Panc1 (cell line): ENCODE measurements at regions of chr20 and their contacts with region 1.

Region 1: GRCh38 chr20:40875116-40876085 is 153.2 kb upstream of the TOP1 start:
- DNase-seq: no peak
- ATAC-seq: no peak
- H3K4me3 ChIP-seq: no peak overlapping the region
- H3K27ac ChIP-seq: no peak overlapping the region
- H3K4me1 ChIP-seq: no peaks in the 10 kb centered on the region
- H3K27me3 ChIP-seq: no peaks in the 10 kb centered on the region; the same call in 1 of the 2 replicates
- CTCF ChIP-seq: no peak

Region 2: DNA sequence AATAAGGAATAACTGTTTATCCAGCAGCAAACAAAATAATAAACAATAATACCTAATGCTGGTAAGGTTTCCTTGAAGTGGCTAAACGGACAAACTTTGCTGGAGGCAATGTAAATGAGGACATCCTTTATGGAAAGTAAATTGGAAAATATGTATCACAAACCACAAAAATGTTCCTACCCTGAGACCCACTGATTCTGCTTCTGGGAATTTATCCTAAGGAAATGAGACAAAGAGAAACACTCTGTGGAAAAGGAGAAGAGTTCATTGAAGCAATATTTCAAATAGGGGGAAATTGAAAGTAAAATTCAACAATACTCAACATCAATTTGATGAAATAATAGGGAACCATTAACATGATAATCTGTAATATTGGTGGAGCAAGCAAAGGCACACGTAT is 224.2 kb before region 1 on chr20:
- CTCF ChIA-PET with region 1: no interaction called
- POLR2A ChIA-PET with region 1: no interaction called
- in situ Hi-C with region 1: no loop called
- intact Hi-C with region 1: no loop called
- DNase-seq: no peak
- ATAC-seq: no peak
- H3K4me3 ChIP-seq: no peak overlapping the region
- H3K27ac ChIP-seq: no peak overlapping the region
- H3K4me1 ChIP-seq: no peaks in the 10 kb centered on the region
- H3K27me3 ChIP-seq: no peaks in the 10 kb centered on the region; the same call in 1 of the 2 replicates
- CTCF ChIP-seq: no peak

Region 3: DNA sequence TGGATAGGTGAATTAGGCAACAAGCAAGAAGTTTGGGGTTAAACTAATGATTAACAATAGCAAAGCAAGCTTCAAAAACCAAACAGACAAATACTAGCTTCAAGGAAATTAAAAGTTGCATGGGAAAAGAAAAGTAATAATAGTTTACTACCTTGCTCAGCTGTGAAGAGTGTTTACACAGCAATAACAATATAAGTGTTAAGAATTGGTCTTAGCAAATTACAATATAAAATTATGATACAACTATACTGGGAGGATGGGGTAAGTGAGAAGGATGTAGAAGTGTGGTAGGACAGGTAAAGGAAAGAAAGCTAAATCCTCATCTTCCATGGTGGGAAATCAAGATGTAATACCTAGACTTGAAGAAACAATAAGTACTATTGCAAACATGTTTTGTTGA is 48.7 kb before region 1 on chr20:
- CTCF ChIA-PET with region 1: no interaction called
- POLR2A ChIA-PET with region 1: no interaction called
- in situ Hi-C with region 1: no loop called
- intact Hi-C with region 1: loop called (anchors 5 kb)
- DNase-seq: no peak
- ATAC-seq: no peak
- H3K4me3 ChIP-seq: no peak overlapping the region
- H3K27ac ChIP-seq: no peak overlapping the region
- H3K4me1 ChIP-seq: no peaks in the 10 kb centered on the region
- H3K27me3 ChIP-seq: peaks cover 6% of the 10 kb centered on the region
- CTCF ChIP-seq: no peak